ENCODE measurements at regions of chr3 and their contacts with region 1.

Region 1: GRCh38 chr3:2078821-2079220 is 19.8 kb upstream of the CNTN4 start:
- DNase-seq: no peak
- H3K4me3 Mint-ChIP-seq: no peak overlapping the region
- H3K27ac Mint-ChIP-seq: no peak overlapping the region
- H3K4me1 Mint-ChIP-seq: no peaks in the 10 kb centered on the region
- H3K27me3 Mint-ChIP-seq: no peaks in the 10 kb centered on the region
- CTCF ChIP-seq: no peak

Region 2: GRCh38 chr3:2023959-2024358 is 54.9 kb before region 1 on chr3:
- CTCF ChIA-PET with region 1: no interaction called
- POLR2A ChIA-PET with region 1: no interaction called
- intact Hi-C with region 1: loop called (anchors 10 kb)
- DNase-seq: peak; percentile 31
- H3K4me3 Mint-ChIP-seq: no peak overlapping the region
- H3K27ac Mint-ChIP-seq: no peak overlapping the region
- H3K4me1 Mint-ChIP-seq: no peaks in the 10 kb centered on the region
- H3K27me3 Mint-ChIP-seq: no peaks in the 10 kb centered on the region
- CTCF ChIP-seq: no peak

Measured in MCF 10A (cell line).